A549 (cell line): ENCODE measurements at regions of chr19 and their contacts with region 1.

Region 1: GRCh38 chr19:35044317-35045117 is 3.0 kb downstream of the HPN start:
- DNase-seq: peak; percentile 76 to 95
- ATAC-seq: peak; percentile 4 to 42; a peak in 4 of 6 replicates
- H3K4me3 ChIP-seq: no peak overlapping the region
- H3K27ac ChIP-seq: no peak overlapping the region
- H3K4me1 ChIP-seq: peaks cover 29% of the 10 kb centered on the region
- CTCF ChIP-seq: peak; percentile 99
- EP300 ChIP-seq: no peak
- POLR2A ChIP-seq: no peak
- RAD21 ChIP-seq: peak; percentile 76 to 82

Region 2: GRCh38 chr19:34963573-34964409 is 80.7 kb before region 1 on chr19 and contains the start of gene ZNF792:
- CTCF ChIA-PET with region 1: interaction called, 253 read pairs
- POLR2A ChIA-PET with region 1: no interaction called
- DNase-seq: peak; percentile 59 to 94
- ATAC-seq: peak; percentile 90 to 95
- H3K4me3 ChIP-seq: peak within 1 kb of the TSS; percentile 87
- H3K27ac ChIP-seq: peak within 1 kb of the TSS; percentile 86 to 90
- H3K4me1 ChIP-seq: peaks cover 11% of the 10 kb centered on the region; the same call in 1 of the 3 replicates
- CTCF ChIP-seq: no peak
- EP300 ChIP-seq: no peak
- POLR2A ChIP-seq: peak; percentile 77
- RAD21 ChIP-seq: no peak
- polyA plus RNA-seq, gene ZNF792: 3.7 and 5.0 TPM in 2 replicates

Region 3: GRCh38 chr19:34990578-34991192 is 53.8 kb before region 1 on chr19:
- CTCF ChIA-PET with region 1: interaction called, 40 read pairs
- POLR2A ChIA-PET with region 1: no interaction called
- DNase-seq: no peak
- ATAC-seq: no peak
- H3K4me3 ChIP-seq: no peak overlapping the region
- H3K27ac ChIP-seq: no peak overlapping the region
- H3K4me1 ChIP-seq: peaks cover 21% of the 10 kb centered on the region
- CTCF ChIP-seq: no peak
- EP300 ChIP-seq: no peak
- POLR2A ChIP-seq: no peak
- RAD21 ChIP-seq: no peak

Region 4: DNA sequence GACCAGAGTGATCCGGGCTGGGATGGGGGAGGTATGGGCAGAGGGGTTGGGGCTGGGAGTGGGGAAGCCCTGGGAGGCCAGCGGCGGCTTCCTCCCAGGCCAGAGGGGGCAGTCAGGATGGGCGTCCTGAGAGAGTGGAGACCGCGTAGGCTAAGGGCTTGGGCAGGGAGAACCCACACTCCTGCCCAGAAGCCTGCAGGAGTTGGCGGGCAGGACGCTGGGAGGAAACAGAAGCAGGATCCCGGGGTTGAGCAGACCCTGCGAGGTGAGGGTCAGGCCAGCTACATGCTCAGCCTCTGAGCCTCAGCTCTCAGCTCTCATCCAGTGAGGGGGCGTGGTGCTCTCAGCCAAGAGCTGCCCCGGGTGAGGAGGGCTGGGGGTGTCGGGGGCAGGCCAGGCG is 22.1 kb before region 1 on chr19:
- CTCF ChIA-PET with region 1: interaction called, 182 read pairs
- POLR2A ChIA-PET with region 1: no interaction called
- DNase-seq: no peak
- ATAC-seq: peak; percentile 1 to 7; a peak in 3 of 6 replicates
- H3K4me3 ChIP-seq: no peak overlapping the region
- H3K27ac ChIP-seq: no peak overlapping the region
- H3K4me1 ChIP-seq: no peaks in the 10 kb centered on the region
- CTCF ChIP-seq: no peak
- EP300 ChIP-seq: no peak
- POLR2A ChIP-seq: no peak
- RAD21 ChIP-seq: no peak

Region 5: DNA sequence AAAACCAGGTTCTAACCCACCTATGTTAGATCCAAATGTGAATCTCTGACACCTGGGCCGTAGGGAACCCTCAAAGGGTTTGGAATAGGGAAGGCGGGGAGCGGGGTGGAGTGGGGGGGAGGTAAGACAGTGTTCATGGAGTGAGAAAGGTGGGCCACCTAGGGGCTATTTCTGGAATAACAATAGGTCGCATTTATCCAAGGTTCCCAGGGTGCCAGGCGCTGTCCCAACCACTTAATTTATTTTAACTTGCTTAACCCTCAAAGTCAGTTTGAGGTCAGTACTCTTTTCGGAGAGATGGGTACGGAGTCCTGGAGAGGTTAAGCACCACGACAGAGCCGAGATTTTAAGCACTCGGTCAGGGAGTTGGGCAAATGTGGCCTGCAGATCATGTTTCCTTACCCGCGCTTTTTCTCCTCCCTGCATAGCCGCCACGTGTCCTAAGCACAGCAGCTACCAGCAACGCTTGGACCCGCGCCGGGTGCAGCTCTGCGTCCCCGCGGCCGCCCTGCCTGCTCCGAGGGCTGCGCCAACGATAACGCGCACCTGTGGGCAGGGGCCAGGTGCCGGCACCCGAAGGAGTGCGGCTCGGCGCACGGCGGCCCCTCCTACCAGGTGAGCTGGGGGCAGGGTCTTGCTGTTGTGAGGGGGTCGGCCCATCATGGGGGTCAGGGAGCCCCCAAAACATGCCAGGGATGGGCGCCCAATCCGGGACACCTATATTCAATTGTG is 46.2 kb after region 1 on chr19:
- CTCF ChIA-PET with region 1: interaction called, 102 read pairs
- POLR2A ChIA-PET with region 1: no interaction called
- DNase-seq: peak; percentile 82 to 99
- ATAC-seq: peak; percentile 82 to 92
- H3K4me3 ChIP-seq: peak overlapping the region; percentile 29; the same call in 2 of the 3 replicates
- H3K27ac ChIP-seq: peak overlapping the region; percentile 10 to 60; a peak in 4 of 6 replicates
- H3K4me1 ChIP-seq: peaks cover 11% of the 10 kb centered on the region; the same call in 2 of the 3 replicates
- CTCF ChIP-seq: peak; percentile 95
- EP300 ChIP-seq: no peak
- POLR2A ChIP-seq: no peak
- RAD21 ChIP-seq: peak; percentile 88 to 97

Region 6: DNA sequence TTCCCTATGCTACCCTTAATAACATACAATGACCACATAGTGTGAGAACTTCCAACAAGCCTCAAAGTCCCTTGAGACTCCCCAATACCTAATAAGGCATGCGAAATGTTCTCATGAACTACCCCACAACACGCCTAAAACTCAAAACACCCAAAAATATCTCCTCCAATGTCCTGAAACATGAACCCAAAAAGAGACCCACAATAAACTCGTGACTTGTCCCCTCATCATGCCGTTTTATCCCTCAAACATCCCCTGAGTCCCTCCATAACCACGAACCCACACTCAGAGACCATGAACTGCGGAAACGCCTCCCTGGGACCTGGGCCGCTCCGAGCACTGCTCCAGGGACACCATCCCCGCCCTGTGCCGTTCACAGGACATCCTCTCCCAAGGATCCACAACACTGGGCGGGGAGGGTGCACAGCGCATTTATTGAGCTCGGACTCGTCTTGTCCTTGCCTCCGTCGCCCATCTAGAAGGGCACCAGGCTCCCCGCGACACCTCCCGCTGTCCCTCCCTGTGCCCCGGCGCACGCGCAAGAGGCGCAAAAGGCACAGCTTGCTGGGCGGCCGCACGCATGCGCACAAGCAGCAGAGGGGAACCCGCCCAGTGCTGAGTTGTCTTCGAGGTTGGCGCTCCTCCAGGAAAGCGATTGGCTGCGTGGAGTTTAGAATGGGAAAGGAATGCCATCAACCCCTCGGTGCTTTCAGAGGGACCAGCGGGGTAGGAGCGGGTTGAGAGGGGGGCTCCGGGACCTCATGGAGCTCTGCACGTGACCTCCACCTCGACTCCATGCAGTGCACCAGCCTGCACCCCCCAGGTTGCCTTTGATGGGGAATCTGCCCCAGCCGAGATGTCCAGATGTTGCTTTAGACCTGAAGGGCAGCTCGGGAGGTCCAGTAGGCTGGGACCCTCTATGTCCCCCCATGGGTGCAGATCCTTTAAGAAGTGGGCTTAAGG is 79.9 kb after region 1 on chr19:
- CTCF ChIA-PET with region 1: interaction called, 16 read pairs
- POLR2A ChIA-PET with region 1: no interaction called
- DNase-seq: peak; percentile 95 to 100
- ATAC-seq: peak; percentile 82 to 96
- H3K4me3 ChIP-seq: peak overlapping the region; percentile 46
- H3K27ac ChIP-seq: peak overlapping the region; percentile 75 to 83
- H3K4me1 ChIP-seq: peaks cover 22% of the 10 kb centered on the region
- CTCF ChIP-seq: no peak
- EP300 ChIP-seq: no peak
- POLR2A ChIP-seq: peak; percentile 99
- RAD21 ChIP-seq: no peak

Region 7: GRCh38 chr19:36931684-36932083 is 1887.2 kb after region 1 on chr19:
- CTCF ChIA-PET with region 1: no interaction called
- POLR2A ChIA-PET with region 1: no interaction called
- DNase-seq: no peak
- ATAC-seq: no peak
- H3K4me3 ChIP-seq: no peak overlapping the region
- H3K27ac ChIP-seq: no peak overlapping the region
- H3K4me1 ChIP-seq: no peaks in the 10 kb centered on the region
- CTCF ChIP-seq: no peak
- EP300 ChIP-seq: no peak
- POLR2A ChIP-seq: no peak
- RAD21 ChIP-seq: no peak